Mammary epithelial cell (primary cell): ENCODE measurements at regions of chr5 and their contacts with region 1.

Region 1: DNA sequence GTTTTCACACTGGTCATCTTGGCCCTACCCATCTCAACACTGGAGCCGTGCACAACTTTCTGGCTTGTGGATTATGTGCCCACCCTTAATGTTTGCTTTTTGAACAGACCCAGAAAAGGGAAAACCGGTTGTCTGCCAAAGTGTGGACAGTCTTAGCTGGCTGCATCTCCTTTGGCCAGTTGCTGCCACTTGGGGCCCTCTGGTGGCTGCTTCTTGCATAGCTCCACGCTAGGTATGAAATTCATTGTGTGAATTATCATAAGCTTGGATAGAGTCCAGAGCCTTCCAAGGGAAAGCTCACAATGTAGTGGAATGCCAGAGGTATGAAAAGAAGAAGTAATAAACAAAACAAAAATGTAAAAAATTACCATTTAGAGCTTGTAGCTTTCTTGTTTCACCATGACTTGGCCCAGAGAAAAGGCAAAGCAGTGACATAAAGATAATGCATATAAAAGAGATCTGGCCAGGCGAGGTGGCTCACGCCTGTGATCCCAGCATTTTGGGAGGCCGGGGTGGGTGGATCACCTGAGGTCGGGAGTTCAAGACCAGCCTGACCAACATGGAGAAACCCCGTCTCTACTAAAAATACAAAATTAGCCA is 12.5 kb upstream of the SLC36A3 start:
- DNase-seq: peak; percentile 55
- H3K4me3 ChIP-seq: no peak overlapping the region
- H3K27ac ChIP-seq: no peak overlapping the region
- H3K4me1 ChIP-seq: no peaks in the 10 kb centered on the region
- H3K27me3 ChIP-seq: no peaks in the 10 kb centered on the region
- CTCF ChIP-seq: peak; percentile 96 to 98

Region 2: DNA sequence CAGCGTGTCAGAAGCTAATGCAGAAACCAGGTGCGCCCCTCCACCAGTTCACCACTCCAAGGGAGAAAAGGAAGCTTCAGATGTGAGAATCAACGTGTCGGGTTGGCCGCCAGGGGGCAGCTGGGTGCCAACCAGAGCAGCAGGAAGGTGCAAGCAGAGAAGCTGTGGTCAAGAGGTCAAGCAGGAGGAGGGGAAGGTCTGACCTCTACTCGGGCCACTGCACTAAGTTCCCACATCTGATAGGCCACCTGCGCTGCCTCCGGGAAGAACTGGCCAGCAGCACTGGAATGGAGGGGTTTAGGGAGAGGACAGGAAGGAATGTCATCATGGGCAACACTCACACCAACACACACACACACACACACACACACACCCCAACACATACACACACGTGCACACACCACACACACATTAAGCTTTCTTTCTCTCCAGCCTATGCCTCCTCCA is 189.9 kb before region 1 on chr5:
- CTCF ChIA-PET with region 1: interaction called, 13 read pairs
- dilution Hi-C with region 1: no loop called
- in situ Hi-C with region 1: loop called in 1 of 2 experiments (anchors 25 kb)
- intact Hi-C with region 1: loop called (anchors 1 kb)
- DNase-seq: peak; percentile 38
- H3K4me3 ChIP-seq: no peak overlapping the region
- H3K27ac ChIP-seq: no peak overlapping the region
- H3K4me1 ChIP-seq: no peaks in the 10 kb centered on the region
- H3K27me3 ChIP-seq: no peaks in the 10 kb centered on the region
- CTCF ChIP-seq: peak; percentile 83 to 88

Region 3: GRCh38 chr5:151239237-151239861 is 76.7 kb before region 1 on chr5:
- CTCF ChIA-PET with region 1: interaction called, 3 read pairs
- dilution Hi-C with region 1: no loop called
- in situ Hi-C with region 1: no loop called
- intact Hi-C with region 1: loop called (anchors 5 kb)
- DNase-seq: no peak
- H3K4me3 ChIP-seq: no peak overlapping the region
- H3K27ac ChIP-seq: no peak overlapping the region
- H3K4me1 ChIP-seq: no peaks in the 10 kb centered on the region
- H3K27me3 ChIP-seq: peaks cover 2% of the 10 kb centered on the region
- CTCF ChIP-seq: peak; percentile 65 to 77

Region 4: DNA sequence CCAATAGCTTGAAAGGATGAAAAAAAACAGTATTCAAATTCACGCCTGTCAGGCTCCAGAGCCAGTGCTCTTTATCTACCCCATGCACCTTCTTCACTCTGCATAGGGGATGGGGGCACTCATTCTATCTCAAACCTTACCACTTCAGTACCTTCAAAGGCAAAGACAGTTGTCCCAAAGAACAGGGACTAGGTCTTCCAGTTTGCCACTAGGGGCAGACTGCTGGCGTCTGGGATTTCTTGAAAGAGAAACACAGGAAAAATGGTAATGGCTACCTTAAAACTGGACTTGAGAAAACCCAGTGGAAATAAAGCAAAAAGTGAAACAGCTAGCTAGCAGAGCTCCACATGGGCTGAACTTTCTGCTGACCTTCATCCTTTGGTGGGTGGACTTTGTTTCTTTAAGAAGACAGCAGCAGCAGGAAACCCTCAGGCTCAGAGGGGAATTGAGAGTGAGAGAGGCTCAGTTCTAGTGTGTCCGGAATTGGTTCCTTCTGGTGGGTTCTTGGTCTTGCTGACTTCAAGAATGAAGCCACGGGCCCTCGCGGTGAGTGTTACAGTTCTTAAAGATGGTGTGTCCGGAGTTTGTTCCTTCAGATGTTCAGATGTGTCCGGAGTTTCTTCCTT is 90.3 kb after region 1 on chr5:
- CTCF ChIA-PET with region 1: no interaction called
- dilution Hi-C with region 1: loop called (anchors 5 kb)
- in situ Hi-C with region 1: no loop called
- intact Hi-C with region 1: no loop called
- DNase-seq: no peak
- H3K4me3 ChIP-seq: no peak overlapping the region
- H3K27ac ChIP-seq: no peak overlapping the region
- H3K4me1 ChIP-seq: no peaks in the 10 kb centered on the region
- H3K27me3 ChIP-seq: no peaks in the 10 kb centered on the region
- CTCF ChIP-seq: peak; percentile 59 to 62